Sigmoid colon (tissue), 7 donors: ENCODE measurements at regions of chr10 and their contacts with region 1.

Region 1: DNA sequence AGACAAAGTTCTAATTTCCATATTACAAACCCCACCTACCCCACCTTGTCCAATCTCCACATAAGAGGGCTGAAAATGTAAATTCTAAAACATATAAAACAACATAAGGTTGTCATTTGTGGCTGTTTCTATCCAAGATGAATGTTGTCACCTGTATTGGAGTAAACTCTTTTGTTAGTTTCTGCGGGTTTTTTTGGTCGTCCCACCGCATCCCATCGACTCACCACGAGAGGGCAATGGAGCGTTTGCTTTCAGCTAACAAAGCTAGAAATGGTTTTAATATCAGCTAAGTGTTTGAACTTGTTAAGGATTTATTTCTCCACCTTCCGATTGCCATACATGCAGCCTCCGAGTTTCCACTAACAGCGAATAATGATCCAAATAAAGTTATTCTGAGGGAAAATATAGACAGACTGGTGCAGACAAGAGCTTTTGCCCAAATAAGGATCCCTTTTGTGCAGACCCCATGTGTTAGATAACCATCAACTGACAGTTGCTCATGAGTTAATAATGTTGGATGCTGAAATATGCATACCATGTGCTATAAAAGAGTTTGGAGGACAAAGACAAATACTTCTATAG is 137.2 kb downstream of the ARID5B start:
- DNase-seq: peak; percentile 86
- H3K4me3 ChIP-seq: peak overlapping the region in 3 of 4 donors; percentile 13 to 37 (median 22)
- H3K27ac ChIP-seq: peak overlapping the region; percentile 69 to 95 (median 82)
- H3K4me1 ChIP-seq: peaks cover 0 to 75% (median 60%) of the 10 kb centered on the region in 4 donors
- H3K27me3 ChIP-seq: no peaks in the 10 kb centered on the region
- CTCF ChIP-seq: peak; percentile 79 to 89 (median 86)
- EP300 ChIP-seq: no peak
- POLR2A ChIP-seq: no peak

Region 2: DNA sequence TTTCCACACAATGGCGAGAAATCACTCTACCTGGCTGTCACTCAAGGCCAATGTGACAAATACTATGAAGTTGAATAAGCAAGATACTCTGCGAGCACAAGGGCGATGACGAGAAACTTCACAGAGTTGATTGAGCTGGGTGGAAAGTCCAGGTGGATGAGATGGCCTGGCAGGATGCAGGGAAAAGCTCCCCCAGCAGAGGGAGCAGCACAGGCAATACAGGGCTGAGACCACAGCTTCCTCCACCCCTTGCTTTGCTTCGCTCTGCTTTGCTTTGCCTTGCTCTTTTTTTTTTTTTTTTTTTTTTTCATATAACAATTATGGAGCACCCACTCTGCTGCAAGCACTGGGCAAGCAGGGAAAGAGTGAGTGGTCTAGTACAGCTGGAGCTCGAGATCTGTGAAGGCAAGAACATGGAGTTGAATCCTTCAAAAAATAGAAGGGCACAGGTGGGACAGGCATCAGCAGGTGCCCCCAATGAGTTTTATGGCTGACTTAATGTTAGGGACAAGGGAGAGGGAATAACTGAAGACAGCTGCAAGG is 287.7 kb before region 1 on chr10:
- intact Hi-C with region 1: loop called (anchors 5 kb)
- DNase-seq: no peak
- H3K4me3 ChIP-seq: no peak overlapping the region
- H3K27ac ChIP-seq: no peak overlapping the region
- H3K4me1 ChIP-seq: peaks cover 0 to 52% (median 29%) of the 10 kb centered on the region in 4 donors
- H3K27me3 ChIP-seq: no peaks in the 10 kb centered on the region
- CTCF ChIP-seq: peak in 3 of 4 experiments; percentile 36 to 48 (median 38)
- EP300 ChIP-seq: no peak
- POLR2A ChIP-seq: no peak

Region 3: GRCh38 chr10:61835069-61835945 is 203.4 kb before region 1 on chr10:
- intact Hi-C with region 1: loop called (anchors 10 kb)
- DNase-seq: no peak
- H3K4me3 ChIP-seq: no peak overlapping the region
- H3K27ac ChIP-seq: peak overlapping the region; percentile 43 to 78 (median 74)
- H3K4me1 ChIP-seq: peaks cover 0 to 35% (median 32%) of the 10 kb centered on the region in 4 donors
- H3K27me3 ChIP-seq: no peaks in the 10 kb centered on the region
- CTCF ChIP-seq: peak; percentile 13 to 42 (median 24)
- EP300 ChIP-seq: no peak
- POLR2A ChIP-seq: no peak

Region 4: DNA sequence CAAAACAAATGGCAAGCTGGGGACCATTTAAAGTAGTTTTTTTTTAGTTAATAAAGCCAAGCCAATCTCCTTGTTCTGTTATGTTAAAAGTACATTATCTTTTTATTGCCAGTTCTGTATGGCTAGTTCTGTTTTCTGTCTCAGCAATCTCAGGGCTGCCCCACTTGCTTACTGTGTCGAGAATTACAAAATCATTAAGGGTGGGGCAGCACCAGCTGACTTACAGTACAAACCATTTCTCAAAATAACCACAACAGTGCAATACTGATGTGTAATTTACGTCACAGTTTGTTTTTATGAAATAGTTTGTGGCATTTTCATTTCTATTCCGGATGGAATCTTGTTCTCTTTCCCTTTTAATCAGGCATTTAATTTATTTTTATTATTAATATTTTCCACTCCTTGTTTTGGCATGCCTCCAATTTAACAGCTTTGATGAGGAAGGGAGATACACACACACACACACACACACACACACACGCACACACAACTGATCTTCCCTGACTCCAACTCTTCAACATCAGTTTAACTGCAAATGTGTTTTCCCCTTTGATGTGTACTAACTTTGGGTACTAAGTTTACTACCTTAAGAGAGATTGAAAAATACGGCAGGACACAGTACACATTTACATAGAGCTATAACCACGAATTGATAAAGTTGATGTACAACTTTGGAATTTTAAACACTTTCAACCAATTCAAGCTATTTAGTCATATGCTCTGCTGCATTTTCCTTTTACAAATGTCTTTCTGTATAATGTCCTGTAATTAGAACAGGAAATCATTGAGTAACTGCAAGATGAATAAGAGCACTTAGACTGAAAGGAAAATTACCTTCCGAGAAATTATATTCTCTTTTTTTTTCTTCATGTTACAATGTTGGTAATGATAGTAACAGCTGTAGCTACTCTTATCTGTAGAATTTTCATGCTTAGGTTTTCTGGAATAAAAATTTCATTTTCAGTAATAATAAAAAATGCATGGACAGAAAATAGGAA is 45.7 kb before region 1 on chr10:
- intact Hi-C with region 1: loop called (anchors 5 kb)
- DNase-seq: peak; percentile 86
- H3K4me3 ChIP-seq: peak overlapping the region in 3 of 4 donors; percentile 1 to 14 (median 7)
- H3K27ac ChIP-seq: peak overlapping the region; percentile 60 to 81 (median 78)
- H3K4me1 ChIP-seq: peaks cover 0 to 48% (median 33%) of the 10 kb centered on the region in 4 donors
- H3K27me3 ChIP-seq: no peaks in the 10 kb centered on the region
- CTCF ChIP-seq: no peak
- EP300 ChIP-seq: peak; percentile 51 to 96 (median 88)
- POLR2A ChIP-seq: no peak

Region 5: DNA sequence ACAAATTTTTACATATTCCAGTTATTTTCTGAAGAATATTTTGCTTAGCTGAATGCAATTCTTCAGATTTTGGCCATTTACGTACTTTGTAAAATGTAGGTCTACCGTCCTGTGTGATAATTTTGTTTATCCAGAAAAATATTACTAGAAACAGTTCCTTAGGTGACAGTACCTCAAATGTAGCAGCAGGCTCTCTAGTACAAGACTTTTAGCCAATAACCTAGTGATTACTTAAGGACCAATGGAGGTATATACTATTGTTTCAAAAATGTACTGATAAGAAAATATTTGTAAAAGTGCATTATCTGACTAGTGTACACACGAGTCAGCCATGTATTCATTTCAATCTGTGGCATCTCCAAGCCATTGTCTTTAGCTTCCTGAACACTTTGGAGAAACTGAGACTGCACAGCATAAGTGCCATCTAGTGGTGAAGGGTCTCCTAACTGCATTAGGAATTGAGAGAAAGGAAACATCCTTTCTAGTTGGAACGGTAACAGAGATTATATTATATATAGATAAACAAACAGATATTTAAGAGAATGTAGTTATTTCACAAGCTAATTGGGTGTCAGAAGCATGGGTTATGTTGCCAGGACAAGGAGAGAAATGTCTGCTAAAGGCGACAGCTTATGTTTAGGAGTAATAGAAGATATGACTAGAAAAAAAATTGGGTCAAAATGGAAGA is 206.2 kb after region 1 on chr10:
- intact Hi-C with region 1: loop called (anchors 1 kb)
- DNase-seq: no peak
- H3K4me3 ChIP-seq: no peak overlapping the region
- H3K27ac ChIP-seq: peak overlapping the region in 1 of 4 donors; percentile 32
- H3K4me1 ChIP-seq: peaks cover 0 to 23% (median 6%) of the 10 kb centered on the region in 4 donors
- H3K27me3 ChIP-seq: no peaks in the 10 kb centered on the region
- CTCF ChIP-seq: peak; percentile 75 to 89 (median 80)
- EP300 ChIP-seq: no peak
- POLR2A ChIP-seq: no peak